GM12878 (cell line): ENCODE measurements at regions of chr11 and their contacts with region 1.

Region 1: DNA sequence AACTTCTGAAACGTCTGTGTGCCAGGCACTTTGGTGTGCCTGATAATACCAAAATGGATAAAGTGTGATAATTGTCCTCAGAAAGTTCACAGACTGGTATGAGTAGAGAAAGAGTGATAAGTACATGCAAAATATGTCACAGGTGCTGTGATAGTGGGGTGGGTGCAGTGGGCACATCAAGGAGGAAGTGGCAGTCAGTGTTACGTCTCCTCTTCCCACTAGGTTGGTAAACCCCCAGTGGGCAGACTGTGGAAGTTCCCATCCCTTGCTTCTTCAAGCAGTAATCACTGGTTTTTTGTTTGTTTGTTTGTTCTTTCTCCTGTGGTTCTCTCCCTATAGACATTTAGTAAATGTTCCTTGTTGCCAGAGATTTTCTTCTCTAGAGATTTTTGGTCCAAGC is 5.4 kb downstream of the RNF121 start:
- DNase-seq: no peak
- ATAC-seq: peak; percentile 69
- H3K4me3 ChIP-seq: peak overlapping the region; percentile 86
- H3K27ac ChIP-seq: peak overlapping the region; percentile 98
- H3K4me1 ChIP-seq: peaks cover 21% of the 10 kb centered on the region
- H3K27me3 ChIP-seq: no peaks in the 10 kb centered on the region
- CTCF ChIP-seq: no peak
- EP300 ChIP-seq: no peak
- POLR2A ChIP-seq: no peak
- RAD21 ChIP-seq: no peak

Region 2: DNA sequence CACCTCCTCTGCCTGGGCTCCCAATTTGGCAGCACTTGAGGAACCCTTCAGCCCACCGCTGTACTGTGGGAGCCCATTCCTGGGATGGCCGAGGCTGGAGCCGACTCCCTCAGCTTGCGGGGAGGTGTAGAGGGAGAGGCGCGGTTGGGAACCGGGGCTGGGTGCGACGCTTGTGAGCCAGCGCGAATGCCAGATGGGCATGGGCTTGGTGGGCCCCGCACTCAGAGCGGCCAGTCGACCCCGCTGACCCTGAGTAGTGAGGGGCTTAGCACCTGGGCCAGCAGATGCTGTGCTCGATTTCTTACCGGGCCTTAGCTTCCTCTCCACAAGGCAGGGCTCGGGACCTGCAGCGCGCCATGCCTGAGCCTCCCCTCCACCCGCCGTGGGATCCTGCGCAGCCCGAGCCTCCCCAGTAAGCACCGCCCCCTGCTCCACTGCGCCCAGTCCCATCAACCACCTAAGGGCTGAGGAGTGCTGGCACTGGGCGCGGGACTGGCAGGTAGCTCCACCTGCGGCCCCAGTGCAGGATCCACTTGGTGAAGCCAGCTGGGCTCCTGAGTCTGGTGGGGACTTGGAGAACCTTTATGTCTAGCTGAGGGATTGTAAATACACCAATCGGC is 159.5 kb before region 1 on chr11:
- CTCF ChIA-PET with region 1: no interaction called
- POLR2A ChIA-PET with region 1: no interaction called
- RAD21 ChIA-PET with region 1: no interaction called
- SMC1A ChIA-PET with region 1: no interaction called
- in situ Hi-C with region 1: no loop called
- intact Hi-C with region 1: no loop called
- DNase-seq: no peak
- ATAC-seq: no peak
- H3K4me3 ChIP-seq: no peak overlapping the region
- H3K27ac ChIP-seq: no peak overlapping the region
- H3K4me1 ChIP-seq: no peaks in the 10 kb centered on the region
- H3K27me3 ChIP-seq: no peaks in the 10 kb centered on the region
- CTCF ChIP-seq: no peak
- EP300 ChIP-seq: no peak
- POLR2A ChIP-seq: no peak
- RAD21 ChIP-seq: no peak

Region 3: GRCh38 chr11:71946144-71946571 is 11.9 kb after region 1 on chr11:
- CTCF ChIA-PET with region 1: interaction called, 38 read pairs
- POLR2A ChIA-PET with region 1: interaction called, 25 read pairs
- RAD21 ChIA-PET with region 1: interaction called, 17 read pairs
- SMC1A ChIA-PET with region 1: interaction called, 50 read pairs
- in situ Hi-C with region 1: no loop called
- intact Hi-C with region 1: no loop called
- DNase-seq: no peak
- ATAC-seq: peak; percentile 80
- H3K4me3 ChIP-seq: no peak overlapping the region
- H3K27ac ChIP-seq: no peak overlapping the region
- H3K4me1 ChIP-seq: peaks cover 13% of the 10 kb centered on the region; the same call in 1 of the 2 replicates
- H3K27me3 ChIP-seq: no peaks in the 10 kb centered on the region
- CTCF ChIP-seq: no peak
- EP300 ChIP-seq: no peak
- POLR2A ChIP-seq: no peak
- RAD21 ChIP-seq: no peak

Region 4: DNA sequence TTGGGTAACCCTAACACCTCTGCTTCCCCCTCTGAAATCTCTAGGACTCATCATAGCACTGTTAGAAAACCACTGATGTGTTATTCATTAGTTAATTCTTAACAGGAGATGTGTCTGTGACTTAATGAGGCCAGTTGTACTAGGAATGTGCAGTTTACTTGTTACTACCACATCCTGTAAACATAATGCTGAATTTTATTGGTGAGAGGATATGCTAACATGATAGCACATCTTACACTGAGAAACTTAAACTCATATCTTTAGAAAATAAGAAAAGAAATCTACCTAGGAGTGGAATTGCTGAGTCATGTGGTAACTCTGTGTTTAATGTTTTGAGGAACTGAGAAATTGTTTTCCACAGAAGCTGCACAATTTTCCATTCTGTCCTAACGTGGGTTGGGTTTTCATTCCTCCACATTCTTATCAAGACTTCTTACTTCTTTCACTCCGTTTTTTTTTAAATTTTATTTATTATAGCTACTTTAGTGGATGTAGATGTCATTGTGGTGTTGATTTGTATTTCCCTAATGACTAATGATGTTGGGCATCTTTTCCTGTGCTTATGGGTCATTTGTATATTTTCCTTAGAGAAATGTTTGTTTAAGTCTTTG is 28.3 kb after region 1 on chr11:
- CTCF ChIA-PET with region 1: interaction called, 4 read pairs
- POLR2A ChIA-PET with region 1: interaction called, 12 read pairs
- RAD21 ChIA-PET with region 1: interaction called, 5 read pairs
- SMC1A ChIA-PET with region 1: interaction called, 17 read pairs
- in situ Hi-C with region 1: no loop called
- intact Hi-C with region 1: loop called (anchors 2 kb)
- DNase-seq: peak; percentile 53
- ATAC-seq: peak; percentile 96
- H3K4me3 ChIP-seq: peak overlapping the region; percentile 46; the same call in 1 of the 2 replicates
- H3K27ac ChIP-seq: peak overlapping the region; percentile 65
- H3K4me1 ChIP-seq: peaks cover 11% of the 10 kb centered on the region
- H3K27me3 ChIP-seq: no peaks in the 10 kb centered on the region
- CTCF ChIP-seq: no peak
- EP300 ChIP-seq: peak in 1 of 2 experiments; percentile 83; a peak in 1 of 4 replicates
- POLR2A ChIP-seq: no peak
- RAD21 ChIP-seq: no peak